ENCODE measurements at regions of chr5 and their contacts with region 1.

Region 1: DNA sequence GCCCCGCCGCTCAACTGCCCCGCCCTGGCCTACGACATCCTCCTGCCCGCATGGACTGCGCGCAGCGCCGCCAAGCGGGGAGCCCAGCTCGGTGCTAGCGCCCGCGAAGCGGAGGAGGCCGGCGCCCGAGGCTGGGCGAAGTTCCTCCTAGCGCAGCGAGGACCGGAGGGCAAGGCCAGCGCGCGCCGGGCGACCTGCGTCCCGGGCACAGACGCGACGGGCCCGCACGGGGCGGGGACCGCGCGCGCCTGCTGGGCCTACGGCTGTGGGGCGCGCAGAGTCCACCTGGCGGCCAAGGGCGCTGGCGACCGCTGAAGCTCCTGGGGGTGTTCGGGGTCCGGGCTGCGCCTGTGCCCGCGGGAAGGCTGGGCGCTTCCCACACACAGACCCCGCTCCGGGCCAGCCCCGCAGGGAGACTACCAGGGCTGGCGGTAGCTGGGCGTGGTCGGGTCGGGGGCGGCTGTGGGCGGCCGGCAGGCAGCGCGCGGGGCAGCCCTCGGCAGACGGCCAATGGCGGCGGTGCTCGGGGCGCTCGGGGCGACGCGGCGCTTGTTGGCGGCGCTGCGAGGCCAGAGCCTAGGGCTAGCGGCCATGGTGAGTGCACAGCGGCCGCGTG is at the start of gene PCBD2:
- DNase-seq: peak; percentile 95
- ATAC-seq: peak; percentile 75
- H3K4me3 ChIP-seq: peak within 1 kb of the TSS; percentile 70 to 88 (median 82)
- H3K4me3 Mint-ChIP-seq: peak within 1 kb of the TSS; percentile 91
- H3K27ac ChIP-seq: peak within 1 kb of the TSS; percentile 80 to 96
- H3K27ac Mint-ChIP-seq: peak within 1 kb of the TSS; percentile 99
- H3K4me1 ChIP-seq: peaks cover 32 to 42% of the 10 kb centered on the region in 2 donors
- H3K4me1 Mint-ChIP-seq: peaks cover 35% of the 10 kb centered on the region
- H3K27me3 ChIP-seq: no peaks in the 10 kb centered on the region
- H3K27me3 Mint-ChIP-seq: no peaks in the 10 kb centered on the region
- CTCF ChIP-seq: peak; percentile 90
- total RNA-seq, gene PCBD2: 15.7 and 20.9 TPM in 2 replicates

Region 2: DNA sequence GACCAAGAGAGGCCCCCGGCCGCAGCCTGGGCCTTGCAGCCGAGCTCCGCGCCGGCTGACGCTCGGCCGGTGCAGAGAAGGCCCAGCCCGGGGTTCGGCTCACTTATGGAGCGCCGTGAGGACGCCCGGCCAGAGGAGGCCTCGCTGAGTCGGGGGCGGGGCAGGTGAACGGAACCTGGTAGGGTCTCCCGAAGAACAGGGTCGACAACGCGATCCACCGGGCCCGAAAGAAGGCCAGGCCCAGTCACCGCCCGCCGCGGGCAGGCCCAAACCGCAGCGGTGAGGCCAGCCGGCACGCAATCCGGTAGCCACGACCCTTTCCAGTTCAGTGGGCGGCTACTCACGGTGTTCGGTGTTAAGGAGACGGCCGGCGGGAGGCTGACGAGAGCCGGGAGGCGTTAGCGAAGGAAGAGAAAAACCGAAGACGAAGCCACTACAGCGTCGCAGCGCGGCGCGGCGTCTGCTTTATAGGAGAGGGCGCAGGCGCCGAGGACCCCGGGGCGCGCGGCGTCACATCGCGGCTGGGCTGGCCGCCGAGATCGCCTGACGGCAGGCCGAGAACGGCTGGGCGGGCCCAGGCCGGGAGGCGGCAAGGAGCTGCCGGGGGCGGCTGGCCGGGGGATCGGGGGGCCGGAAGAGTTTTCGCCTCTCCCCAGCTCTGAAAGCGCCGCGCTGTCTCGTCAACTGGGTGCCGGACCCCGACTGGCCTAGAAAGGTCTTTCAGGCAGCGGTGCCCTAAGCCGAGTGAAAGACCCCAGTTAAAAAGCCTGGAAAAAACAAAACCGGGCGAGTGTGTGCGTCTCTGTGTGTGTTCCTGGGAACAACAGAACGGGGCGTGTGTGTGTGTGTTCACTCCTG is 728.0 kb before region 1 on chr5 and contains the start of gene SKP1:
- CTCF ChIA-PET with region 1: no interaction called
- POLR2A ChIA-PET with region 1: interaction called, 4 read pairs
- intact Hi-C with region 1: loop called (anchors 2 kb)
- DNase-seq: peak; percentile 95
- ATAC-seq: peak; percentile 86
- H3K4me3 ChIP-seq: peak within 1 kb of the TSS; percentile 73 to 100 (median 93)
- H3K4me3 Mint-ChIP-seq: peak within 1 kb of the TSS; percentile 96
- H3K27ac ChIP-seq: peak within 1 kb of the TSS; percentile 98 to 100
- H3K27ac Mint-ChIP-seq: peak within 1 kb of the TSS; percentile 98
- H3K4me1 ChIP-seq: peaks cover 25 to 27% of the 10 kb centered on the region in 2 donors
- H3K4me1 Mint-ChIP-seq: peaks cover 29% of the 10 kb centered on the region
- H3K27me3 ChIP-seq: no peaks in the 10 kb centered on the region
- H3K27me3 Mint-ChIP-seq: no peaks in the 10 kb centered on the region
- CTCF ChIP-seq: no peak
- total RNA-seq, gene SKP1: 182 and 186 TPM in 2 replicates

Region 3: DNA sequence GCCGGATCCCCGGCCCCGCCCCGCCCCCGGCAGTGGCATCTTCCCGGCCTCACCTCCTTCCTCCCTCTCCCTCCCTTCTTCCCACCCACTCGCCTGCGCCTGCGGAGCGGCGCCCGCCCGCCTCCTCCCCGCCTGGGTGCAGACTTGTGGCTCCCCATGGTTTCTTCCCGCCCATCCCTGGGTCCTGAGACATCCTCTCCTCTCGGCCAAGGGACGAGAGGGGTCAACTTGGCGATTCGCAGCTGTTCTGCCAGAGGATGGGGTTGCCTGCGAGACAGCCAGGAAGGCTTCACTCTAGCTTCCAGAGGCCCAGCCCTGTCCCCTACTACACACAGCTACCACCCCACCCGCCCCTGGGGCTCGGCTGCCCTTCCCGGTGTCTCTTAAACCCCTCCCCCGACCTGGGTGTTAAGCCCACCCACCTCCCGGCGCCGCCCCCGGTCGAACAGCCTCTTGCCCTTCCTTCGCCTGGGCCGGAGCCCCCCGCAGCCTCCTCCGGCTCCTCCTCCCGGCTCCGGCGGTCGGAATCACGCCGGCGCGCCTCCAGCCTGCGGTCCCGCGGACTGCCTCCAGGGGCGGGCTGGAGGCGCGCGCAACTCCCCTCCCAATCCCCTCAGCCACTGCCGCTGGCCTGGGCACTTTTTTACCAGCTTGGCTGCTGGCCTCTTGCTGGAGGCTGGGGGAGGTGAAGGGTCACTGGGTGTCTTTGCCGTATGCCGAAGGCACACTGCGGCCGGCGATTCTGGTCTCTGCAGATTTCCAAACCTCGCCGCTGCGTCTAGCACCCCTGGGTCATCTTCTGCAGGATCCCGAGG is 377.4 kb before region 1 on chr5:
- CTCF ChIA-PET with region 1: no interaction called
- POLR2A ChIA-PET with region 1: interaction called, 4 read pairs
- intact Hi-C with region 1: loop called (anchors 10 kb)
- DNase-seq: peak; percentile 82
- ATAC-seq: peak; percentile 26
- H3K4me3 ChIP-seq: peak overlapping the region; percentile 70 to 100 (median 98)
- H3K4me3 Mint-ChIP-seq: peak overlapping the region; percentile 99
- H3K27ac ChIP-seq: peak overlapping the region; percentile 54 to 99
- H3K27ac Mint-ChIP-seq: peak overlapping the region; percentile 99
- H3K4me1 ChIP-seq: peaks cover 34 to 53% of the 10 kb centered on the region in 2 donors
- H3K4me1 Mint-ChIP-seq: peaks cover 57% of the 10 kb centered on the region
- H3K27me3 ChIP-seq: no peaks in the 10 kb centered on the region
- H3K27me3 Mint-ChIP-seq: no peaks in the 10 kb centered on the region
- CTCF ChIP-seq: peak; percentile 80

Region 4: DNA sequence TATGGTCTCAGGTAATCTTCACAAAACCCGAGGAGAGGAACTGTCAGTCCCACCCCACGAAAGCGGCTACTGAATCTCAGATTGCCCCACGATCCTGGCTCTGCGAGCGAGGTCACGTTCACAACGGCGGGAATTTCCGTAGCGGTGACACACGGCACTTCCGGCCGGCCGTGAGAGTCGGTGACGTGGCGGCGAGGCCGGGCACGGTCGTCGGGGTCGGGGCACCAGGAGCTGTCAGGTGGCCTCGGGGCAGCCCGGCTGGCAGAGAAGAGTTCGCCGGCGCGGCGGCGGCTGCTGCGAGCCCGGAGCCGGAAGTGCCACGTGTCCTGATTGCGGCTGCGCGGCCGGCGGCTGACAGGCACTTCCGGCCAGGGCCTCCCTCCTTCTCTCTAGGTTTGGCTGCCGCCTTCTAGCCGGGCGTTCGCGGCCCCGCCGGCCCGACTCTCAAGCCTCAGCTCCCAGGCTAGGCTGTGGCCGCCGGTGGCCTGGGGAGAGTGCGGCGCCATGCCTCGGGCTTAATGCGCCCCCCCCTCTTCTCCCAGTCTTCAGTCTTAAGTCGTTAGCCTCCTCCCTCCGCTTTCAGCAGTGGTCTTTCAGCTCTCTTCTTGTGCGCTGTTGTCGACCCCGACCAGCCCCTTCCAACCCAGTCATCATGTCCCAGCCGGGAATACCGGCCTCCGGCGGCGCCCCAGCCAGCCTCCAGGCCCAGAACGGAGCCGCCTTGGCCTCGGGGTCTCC is 256.1 kb before region 1 on chr5 and contains the start of gene SEC24A:
- CTCF ChIA-PET with region 1: interaction called, 5 read pairs
- POLR2A ChIA-PET with region 1: no interaction called
- intact Hi-C with region 1: loop called (anchors 2 kb)
- DNase-seq: peak; percentile 94
- ATAC-seq: peak; percentile 83
- H3K4me3 ChIP-seq: peak within 1 kb of the TSS; percentile 80 to 91 (median 88)
- H3K4me3 Mint-ChIP-seq: peak within 1 kb of the TSS; percentile 96
- H3K27ac ChIP-seq: peak within 1 kb of the TSS; percentile 94 to 99
- H3K27ac Mint-ChIP-seq: peak within 1 kb of the TSS; percentile 94
- H3K4me1 ChIP-seq: peaks cover 17 to 18% of the 10 kb centered on the region in 2 donors
- H3K4me1 Mint-ChIP-seq: peaks cover 24% of the 10 kb centered on the region
- H3K27me3 ChIP-seq: no peaks in the 10 kb centered on the region
- H3K27me3 Mint-ChIP-seq: no peaks in the 10 kb centered on the region
- CTCF ChIP-seq: no peak
- total RNA-seq, gene SEC24A: 13.0 and 14.3 TPM in 2 replicates

Region 5: DNA sequence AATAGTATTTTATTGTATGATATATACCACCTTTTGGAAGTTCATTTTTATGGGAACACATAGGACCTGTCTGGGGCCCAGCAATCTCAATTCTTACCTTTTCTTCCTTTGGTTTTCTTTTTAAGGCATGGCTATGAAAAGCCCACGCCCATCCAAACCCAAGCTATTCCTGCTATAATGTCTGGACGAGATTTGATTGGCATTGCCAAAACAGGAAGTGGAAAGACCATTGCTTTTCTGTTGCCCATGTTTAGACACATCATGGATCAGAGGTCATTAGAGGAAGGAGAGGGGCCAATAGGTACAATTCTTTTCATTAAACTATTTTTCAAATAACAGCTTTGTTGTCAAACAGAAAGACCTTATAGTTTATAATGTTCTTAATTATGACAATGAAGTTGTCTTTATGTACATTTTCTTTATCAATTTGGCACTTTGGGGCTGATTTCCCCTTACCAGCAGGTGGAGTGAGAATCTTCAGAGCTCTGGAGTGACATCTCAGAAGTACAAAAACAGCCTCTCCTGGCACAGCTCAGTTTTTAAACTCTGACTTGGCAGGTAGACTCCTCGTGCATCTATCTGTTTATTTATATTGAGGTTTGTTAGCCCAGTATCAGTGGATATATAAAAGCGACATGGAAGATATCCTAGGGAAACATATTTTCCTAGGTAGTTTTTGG is 120.4 kb before region 1 on chr5:
- CTCF ChIA-PET with region 1: interaction called, 12 read pairs
- POLR2A ChIA-PET with region 1: interaction called, 6 read pairs
- intact Hi-C with region 1: loop called (anchors 1 kb)
- DNase-seq: peak; percentile 44
- ATAC-seq: no peak
- H3K4me3 ChIP-seq: no peak overlapping the region
- H3K4me3 Mint-ChIP-seq: no peak overlapping the region
- H3K27ac ChIP-seq: peak overlapping the region in 1 of 2 donors; percentile 32
- H3K27ac Mint-ChIP-seq: peak overlapping the region; percentile 15
- H3K4me1 ChIP-seq: no peaks in the 10 kb centered on the region
- H3K4me1 Mint-ChIP-seq: no peaks in the 10 kb centered on the region
- H3K27me3 ChIP-seq: no peaks in the 10 kb centered on the region
- H3K27me3 Mint-ChIP-seq: no peaks in the 10 kb centered on the region
- CTCF ChIP-seq: peak; percentile 49

Region 6: GRCh38 chr5:134873987-134874830 is 30.5 kb before region 1 on chr5 and contains the start of gene TXNDC15:
- CTCF ChIA-PET with region 1: interaction called, 20 read pairs
- POLR2A ChIA-PET with region 1: interaction called, 30 read pairs
- intact Hi-C with region 1: loop called (anchors 1 kb)
- DNase-seq: peak; percentile 89
- ATAC-seq: peak; percentile 92
- H3K4me3 ChIP-seq: peak within 1 kb of the TSS; percentile 78 to 94 (median 88)
- H3K4me3 Mint-ChIP-seq: peak within 1 kb of the TSS; percentile 96
- H3K27ac ChIP-seq: peak within 1 kb of the TSS; percentile 91 to 95
- H3K27ac Mint-ChIP-seq: peak within 1 kb of the TSS; percentile 94
- H3K4me1 ChIP-seq: peaks cover 22 to 39% of the 10 kb centered on the region in 2 donors
- H3K4me1 Mint-ChIP-seq: peaks cover 37% of the 10 kb centered on the region
- H3K27me3 ChIP-seq: no peaks in the 10 kb centered on the region
- H3K27me3 Mint-ChIP-seq: no peaks in the 10 kb centered on the region
- CTCF ChIP-seq: no peak
- total RNA-seq, gene TXNDC15: 45.2 and 50.4 TPM in 2 replicates

Measured in B cell (primary cell).